Motor neuron (in vitro differentiated cells): ENCODE measurements at regions of chr17 and their contacts with region 1.

Region 1: GRCh38 chr17:74379495-74380085 is 12.3 kb downstream of the GPR142 start:
- ATAC-seq: peak; percentile 94 to 98 (median 96)
- H3K4me3 ChIP-seq: no peak overlapping the region
- H3K27ac ChIP-seq: no peak overlapping the region
- H3K4me1 ChIP-seq: peaks cover 3 to 13% of the 10 kb centered on the region in 2 donors

Region 2: DNA sequence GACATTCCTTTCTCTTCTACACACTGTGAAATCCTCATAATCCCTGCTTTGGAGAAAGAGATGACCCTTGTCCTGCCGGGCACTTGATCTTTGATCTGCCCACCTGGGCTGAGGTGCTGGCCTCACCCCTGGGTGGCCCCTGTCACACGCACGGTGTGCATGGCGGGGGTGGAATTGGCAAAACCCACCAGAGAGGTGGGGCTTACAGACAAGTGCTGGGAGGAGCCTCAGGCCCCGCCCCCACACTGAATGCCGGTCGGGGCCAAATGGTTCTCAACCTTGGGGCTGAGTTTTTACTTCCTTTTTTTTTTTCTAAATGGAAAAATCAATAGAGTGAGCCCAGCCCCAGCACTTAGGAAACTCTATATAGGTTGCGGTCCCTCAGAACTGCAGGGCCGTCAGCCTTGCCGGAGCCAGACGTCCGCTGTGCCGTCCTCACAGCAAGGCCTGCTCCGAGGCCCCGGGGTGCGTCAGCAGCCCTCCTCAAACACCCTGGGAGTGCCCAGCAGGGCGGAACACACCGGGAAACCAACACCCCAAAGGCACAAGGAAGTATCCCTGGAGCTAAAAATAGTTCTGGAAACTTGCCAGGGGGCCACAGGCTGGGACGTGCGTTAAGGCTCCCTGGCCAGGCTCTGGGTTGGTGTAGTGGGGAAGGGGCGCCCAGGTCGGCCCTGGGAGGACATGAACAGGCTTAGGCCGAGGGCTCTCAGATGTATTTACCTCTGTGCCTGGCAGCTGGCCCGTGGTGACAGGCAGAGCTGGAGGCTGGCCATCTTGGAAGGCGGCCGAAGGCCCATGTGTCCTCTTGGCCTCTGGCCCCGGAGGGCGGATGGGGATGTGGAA is 63.3 kb after region 1 on chr17:
- in situ Hi-C with region 1: loop called in 1 of 9 experiments (anchors 10 kb)
- ATAC-seq: peak; percentile 45 to 84 (median 64)
- H3K4me3 ChIP-seq: no peak overlapping the region
- H3K27ac ChIP-seq: peak overlapping the region in 1 of 2 donors; percentile 4
- H3K4me1 ChIP-seq: peaks cover 13 to 27% of the 10 kb centered on the region in 2 donors

Region 3: DNA sequence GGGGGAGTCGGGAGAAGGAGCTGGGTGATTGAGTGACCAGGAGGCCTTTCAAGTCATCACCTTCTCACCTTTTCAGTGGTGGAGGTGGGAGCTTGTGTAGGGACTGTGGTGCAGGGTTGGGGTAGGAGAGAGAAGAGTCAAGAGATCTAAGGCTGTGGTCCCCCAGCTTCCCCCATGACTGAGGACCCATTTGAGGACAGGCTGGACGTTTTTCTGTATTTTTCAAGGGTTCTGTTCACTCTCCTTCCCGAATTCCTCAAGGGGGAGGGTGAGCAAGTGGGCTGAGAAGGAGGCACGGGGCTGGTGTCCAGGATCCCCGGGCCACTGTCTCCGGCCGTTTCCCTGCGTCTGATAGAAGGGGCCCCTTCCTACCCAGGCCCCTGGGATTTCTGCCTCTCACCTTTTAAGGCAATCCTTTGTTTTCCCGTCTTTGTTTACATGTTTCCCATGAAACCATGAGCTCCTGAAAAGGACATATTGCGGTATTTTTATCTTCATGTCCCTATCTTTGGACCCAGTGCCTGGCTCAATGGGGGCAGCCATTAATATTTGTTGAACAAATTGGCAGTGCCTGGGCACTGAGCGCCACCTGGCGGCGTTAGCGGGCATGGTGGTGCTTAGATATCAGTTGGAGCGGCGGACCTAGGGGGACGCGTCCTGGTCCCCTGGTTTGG is 77.7 kb after region 1 on chr17:
- in situ Hi-C with region 1: loop called in 2 of 9 experiments (anchors 10 kb)
- ATAC-seq: peak in 3 of 8 experiments; percentile 2 to 14 (median 8)
- H3K4me3 ChIP-seq: no peak overlapping the region
- H3K27ac ChIP-seq: no peak overlapping the region
- H3K4me1 ChIP-seq: peaks cover 30 to 43% of the 10 kb centered on the region in 2 donors